Calu3 (cell line): ENCODE measurements at regions of chr7 and their contacts with region 1.

Region 1: DNA sequence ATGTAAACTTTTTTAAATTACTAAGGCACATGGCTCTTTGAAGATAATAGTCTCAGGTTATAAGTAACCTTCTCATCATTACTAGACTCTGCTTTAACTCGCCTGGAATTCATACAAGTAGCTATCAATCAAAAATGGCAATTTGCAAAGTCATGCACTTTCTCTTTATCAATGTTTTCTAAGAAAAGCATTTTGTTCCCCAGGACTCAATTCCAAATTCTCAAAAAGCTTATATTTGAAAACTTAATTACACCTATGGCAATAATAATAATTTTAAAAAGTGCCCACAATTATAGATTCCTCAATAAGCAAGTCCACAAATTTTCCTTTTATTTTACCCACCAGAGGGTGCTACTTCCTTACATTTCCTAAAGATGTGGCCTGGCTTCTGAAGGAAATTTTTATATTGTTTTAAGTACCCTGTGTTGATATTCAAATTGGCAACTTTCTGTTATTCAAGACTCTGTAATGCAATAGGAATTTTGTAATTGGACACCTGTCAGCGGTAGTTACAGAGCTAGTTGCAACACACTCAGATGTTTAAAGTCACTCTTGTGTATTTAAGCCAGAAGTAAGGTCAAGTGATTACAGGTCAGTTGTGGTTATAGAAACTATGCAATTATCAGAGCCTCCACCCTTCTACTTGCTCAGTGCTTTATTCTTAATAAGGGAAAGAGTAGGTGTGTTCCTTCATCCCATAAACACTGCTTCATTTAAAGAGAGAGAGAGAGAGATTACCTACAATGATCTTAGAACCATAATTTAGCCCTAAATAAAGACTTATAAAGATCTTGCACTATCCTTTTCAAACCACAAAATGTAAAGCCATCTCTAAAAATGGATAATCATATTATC is 47.1 kb upstream of the HYAL4 start:
- DNase-seq: peak; percentile 50
- H3K4me3 Mint-ChIP-seq: peak overlapping the region; percentile 42
- H3K27ac Mint-ChIP-seq: peak overlapping the region; percentile 12
- H3K4me1 Mint-ChIP-seq: peaks cover 9% of the 10 kb centered on the region
- H3K27me3 Mint-ChIP-seq: peaks cover 5% of the 10 kb centered on the region
- CTCF ChIP-seq: peak; percentile 48

Region 2: GRCh38 chr7:123682690-123683089 is 115.2 kb before region 1 on chr7:
- CTCF ChIA-PET with region 1: interaction called, 8 read pairs
- intact Hi-C with region 1: loop called (anchors 1 kb)
- DNase-seq: peak; percentile 24
- H3K4me3 Mint-ChIP-seq: no peak overlapping the region
- H3K27ac Mint-ChIP-seq: no peak overlapping the region
- H3K4me1 Mint-ChIP-seq: no peaks in the 10 kb centered on the region
- H3K27me3 Mint-ChIP-seq: no peaks in the 10 kb centered on the region
- CTCF ChIP-seq: peak; percentile 21

Region 3: GRCh38 chr7:123846216-123846891 is 48.5 kb after region 1 on chr7:
- CTCF ChIA-PET with region 1: interaction called, 5 read pairs
- intact Hi-C with region 1: loop called (anchors 5 kb)
- DNase-seq: peak; percentile 47
- H3K4me3 Mint-ChIP-seq: no peak overlapping the region
- H3K27ac Mint-ChIP-seq: peak overlapping the region; percentile 16
- H3K4me1 Mint-ChIP-seq: peaks cover 35% of the 10 kb centered on the region
- H3K27me3 Mint-ChIP-seq: no peaks in the 10 kb centered on the region
- CTCF ChIP-seq: no peak

Region 4: DNA sequence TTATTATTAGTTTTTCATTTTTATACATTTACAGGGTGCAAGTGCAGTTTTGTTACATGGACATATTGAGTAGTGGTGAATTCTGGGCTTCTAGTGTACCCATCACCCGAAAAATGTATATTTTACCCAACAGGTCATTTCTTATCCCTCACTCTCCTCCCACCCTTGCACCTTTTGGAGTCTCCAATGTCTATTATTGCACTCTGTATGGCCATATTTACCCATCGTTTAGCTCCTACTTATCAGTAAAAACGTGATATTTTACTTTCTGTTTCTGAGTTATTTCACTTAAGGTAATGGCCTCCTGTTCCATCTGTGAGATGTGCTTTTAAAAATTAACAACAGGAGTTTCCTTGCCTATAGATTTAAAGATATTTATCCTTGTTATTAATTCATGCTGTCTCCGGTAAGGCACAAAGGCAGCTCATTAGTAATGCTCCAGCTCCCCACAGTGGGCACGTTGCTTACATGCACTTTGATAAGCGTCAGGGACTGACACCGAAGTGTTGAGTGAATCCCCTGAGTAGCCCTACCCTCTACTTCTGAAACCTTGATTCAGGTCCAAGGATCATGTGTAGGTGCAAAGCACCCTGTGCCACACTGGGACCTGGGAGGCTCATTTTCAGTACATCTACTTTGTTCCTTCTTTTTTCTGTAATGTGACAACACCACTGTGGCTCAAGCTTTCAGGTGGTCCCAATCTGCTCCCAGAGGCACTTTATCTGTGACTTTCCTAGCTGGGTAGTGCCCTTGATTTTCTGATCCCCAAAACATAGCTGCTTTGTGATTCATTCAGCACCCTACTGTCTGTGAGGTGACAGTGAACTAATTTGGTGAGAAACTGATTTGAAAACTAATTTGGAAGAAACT is 74.3 kb after region 1 on chr7:
- CTCF ChIA-PET with region 1: interaction called, 19 read pairs
- intact Hi-C with region 1: loop called (anchors 2 kb)
- DNase-seq: peak; percentile 68
- H3K4me3 Mint-ChIP-seq: no peak overlapping the region
- H3K27ac Mint-ChIP-seq: no peak overlapping the region
- H3K4me1 Mint-ChIP-seq: peaks cover 23% of the 10 kb centered on the region
- H3K27me3 Mint-ChIP-seq: no peaks in the 10 kb centered on the region
- CTCF ChIP-seq: peak; percentile 52

Region 5: DNA sequence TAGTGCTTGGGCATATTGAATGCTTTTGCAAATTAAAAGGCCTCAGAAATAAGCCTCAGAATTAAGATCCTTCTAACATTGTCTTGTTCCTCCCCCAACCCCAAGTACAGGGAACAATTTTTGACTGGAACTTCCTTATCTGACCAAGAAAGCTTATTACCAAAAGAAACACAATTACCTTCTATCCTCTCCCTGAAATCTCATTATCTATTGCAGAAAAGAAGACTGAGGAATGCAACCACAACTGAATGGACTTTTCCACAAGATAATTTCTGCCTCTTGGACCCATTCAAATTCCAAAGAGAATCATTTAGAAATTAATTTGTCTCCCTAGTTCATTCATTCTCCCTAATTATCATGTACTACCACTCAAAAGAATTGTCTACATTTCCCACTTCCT is 90.3 kb after region 1 on chr7:
- CTCF ChIA-PET with region 1: no interaction called
- intact Hi-C with region 1: no loop called
- DNase-seq: no peak
- H3K4me3 Mint-ChIP-seq: no peak overlapping the region
- H3K27ac Mint-ChIP-seq: no peak overlapping the region
- H3K4me1 Mint-ChIP-seq: no peaks in the 10 kb centered on the region
- H3K27me3 Mint-ChIP-seq: no peaks in the 10 kb centered on the region
- CTCF ChIP-seq: no peak

Region 6: DNA sequence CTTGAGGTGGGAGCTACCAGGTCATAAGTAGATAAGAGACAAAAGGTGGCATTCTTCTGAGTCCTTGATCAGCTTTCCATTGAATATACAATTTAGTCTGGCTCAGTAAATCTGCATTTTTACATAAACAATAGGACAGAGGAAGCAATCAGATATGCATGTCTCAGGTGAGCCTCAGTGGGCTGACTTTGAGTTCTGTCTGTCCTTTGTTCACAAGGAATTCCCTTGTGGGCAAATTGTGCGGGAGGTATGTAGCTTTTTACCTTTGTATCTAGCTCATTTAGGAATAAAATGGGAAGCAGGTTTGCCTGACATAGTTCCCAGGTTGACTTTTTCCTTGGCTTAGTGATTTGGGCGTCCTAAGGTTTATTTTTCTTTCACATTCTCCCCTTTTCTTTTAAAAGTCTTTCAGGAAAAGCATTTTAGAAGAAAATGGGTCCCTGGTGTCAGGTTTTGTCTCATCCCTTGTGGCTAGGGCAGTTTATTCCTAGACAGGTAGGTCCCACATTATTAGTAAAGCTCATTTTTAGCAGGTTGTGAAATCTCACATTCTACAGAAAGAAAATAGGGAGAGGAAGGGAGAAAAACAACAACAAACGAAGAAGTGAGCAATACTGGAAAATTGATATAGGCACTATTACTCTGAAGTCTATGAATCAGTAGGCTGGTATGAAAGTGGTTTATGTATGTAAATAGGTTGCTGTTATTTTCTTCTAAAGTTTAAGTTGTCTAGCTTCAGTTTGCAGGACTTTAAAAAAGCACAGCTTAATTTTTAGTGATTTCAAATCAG is 143.7 kb after region 1 on chr7:
- CTCF ChIA-PET with region 1: interaction called, 10 read pairs
- intact Hi-C with region 1: no loop called
- DNase-seq: no peak
- H3K4me3 Mint-ChIP-seq: no peak overlapping the region
- H3K27ac Mint-ChIP-seq: no peak overlapping the region
- H3K4me1 Mint-ChIP-seq: peaks cover 28% of the 10 kb centered on the region
- H3K27me3 Mint-ChIP-seq: no peaks in the 10 kb centered on the region
- CTCF ChIP-seq: no peak